WTC11 (cell line): ENCODE measurements at regions of chr15 and their contacts with region 1.

Region 1: DNA sequence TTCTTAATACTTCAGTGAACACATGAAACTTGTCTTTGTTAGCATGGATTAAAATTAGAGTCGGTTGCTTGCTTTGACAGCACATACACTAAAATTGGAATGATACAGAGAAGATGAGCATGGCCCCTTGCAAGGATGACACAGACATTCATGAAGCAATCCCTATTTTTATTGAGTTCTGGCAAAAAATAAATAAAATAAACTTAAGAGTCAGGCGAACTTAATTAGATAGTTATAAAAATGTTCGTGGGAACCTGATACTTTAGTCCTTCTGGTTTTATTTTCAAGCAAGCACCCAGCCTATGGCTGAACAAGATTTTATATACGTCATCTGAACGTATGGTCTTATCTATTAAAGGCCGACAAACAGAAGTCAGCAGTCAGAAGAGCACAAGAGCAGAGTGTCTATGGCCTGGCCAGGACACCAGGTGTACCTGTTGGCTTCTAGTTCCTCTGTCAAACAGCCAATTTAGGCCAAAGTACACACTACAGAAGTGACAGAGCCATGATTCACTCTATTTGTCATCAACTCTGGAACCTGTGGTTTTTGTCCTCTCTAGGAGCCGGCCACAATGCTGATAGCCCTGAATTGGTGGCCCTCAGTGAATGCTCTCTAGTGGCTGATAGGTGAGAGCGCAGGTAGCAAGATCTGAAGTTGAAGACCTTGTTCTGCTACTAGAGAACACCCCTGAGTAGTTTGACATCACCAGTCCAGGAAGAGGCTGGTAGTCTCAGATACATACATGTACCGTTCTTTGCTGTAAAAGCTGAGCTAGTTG is 64.3 kb downstream of the LEO1 start:
- DNase-seq: no peak
- ATAC-seq: peak; percentile 82
- H3K4me3 Mint-ChIP-seq: no peak overlapping the region
- H3K27ac Mint-ChIP-seq: peak overlapping the region; percentile 45; the same call in 1 of the 2 replicates
- H3K4me1 Mint-ChIP-seq: peaks cover 6% of the 10 kb centered on the region; the same call in 1 of the 2 replicates
- H3K27me3 Mint-ChIP-seq: no peaks in the 10 kb centered on the region
- CTCF ChIP-seq: no peak

Region 2: GRCh38 chr15:51737280-51738017 is 169.9 kb before region 1 on chr15 and contains the start of gene LYSMD2:
- CTCF ChIA-PET with region 1: no interaction called
- POLR2A ChIA-PET with region 1: no interaction called
- DNase-seq: peak; percentile 52
- ATAC-seq: peak; percentile 63
- H3K4me3 Mint-ChIP-seq: peak within 1 kb of the TSS; percentile 71
- H3K27ac Mint-ChIP-seq: no peak within 1 kb of the TSS
- H3K4me1 Mint-ChIP-seq: peaks cover 13% of the 10 kb centered on the region
- H3K27me3 Mint-ChIP-seq: peaks cover 44% of the 10 kb centered on the region
- CTCF ChIP-seq: no peak
- total RNA-seq, gene LYSMD2: 2.2 to 2.7 TPM (median 2.6 TPM) in 3 replicates

Region 3: GRCh38 chr15:51801391-51801835 is 105.9 kb before region 1 on chr15:
- CTCF ChIA-PET with region 1: interaction called, 11 read pairs
- POLR2A ChIA-PET with region 1: interaction called, 4 read pairs
- DNase-seq: peak; percentile 63
- ATAC-seq: peak; percentile 91
- H3K4me3 Mint-ChIP-seq: no peak overlapping the region
- H3K27ac Mint-ChIP-seq: no peak overlapping the region
- H3K4me1 Mint-ChIP-seq: no peaks in the 10 kb centered on the region
- H3K27me3 Mint-ChIP-seq: no peaks in the 10 kb centered on the region
- CTCF ChIP-seq: peak; percentile 39; the same call in 1 of the 2 replicates

Region 4: GRCh38 chr15:51853998-51854397 is 53.3 kb before region 1 on chr15:
- CTCF ChIA-PET with region 1: interaction called, 11 read pairs
- POLR2A ChIA-PET with region 1: interaction called, 3 read pairs
- DNase-seq: no peak
- ATAC-seq: no peak
- H3K4me3 Mint-ChIP-seq: no peak overlapping the region
- H3K27ac Mint-ChIP-seq: no peak overlapping the region
- H3K4me1 Mint-ChIP-seq: peaks cover 38% of the 10 kb centered on the region
- H3K27me3 Mint-ChIP-seq: no peaks in the 10 kb centered on the region
- CTCF ChIP-seq: no peak

Region 5: DNA sequence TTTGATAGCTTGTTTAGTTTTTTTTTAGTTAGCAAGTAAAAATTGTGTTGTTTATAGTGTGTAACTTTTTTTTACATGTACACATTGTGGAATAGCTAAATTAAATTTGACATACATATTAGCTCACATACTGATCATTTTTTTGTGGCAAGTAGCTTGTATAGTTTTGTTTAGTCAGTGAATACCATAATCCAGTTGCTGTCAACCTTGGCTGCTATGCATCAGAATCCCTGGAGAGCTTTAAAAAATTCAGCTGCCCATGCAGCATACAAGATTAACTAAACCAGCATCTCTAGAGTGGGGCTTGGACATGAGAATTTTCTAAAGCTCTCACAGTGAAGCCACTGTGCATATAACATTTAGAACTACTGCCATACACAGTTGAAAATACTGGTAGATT is 23.9 kb before region 1 on chr15:
- CTCF ChIA-PET with region 1: interaction called, 15 read pairs
- POLR2A ChIA-PET with region 1: no interaction called
- DNase-seq: no peak
- ATAC-seq: no peak
- H3K4me3 Mint-ChIP-seq: no peak overlapping the region
- H3K27ac Mint-ChIP-seq: no peak overlapping the region
- H3K4me1 Mint-ChIP-seq: no peaks in the 10 kb centered on the region
- H3K27me3 Mint-ChIP-seq: no peaks in the 10 kb centered on the region
- CTCF ChIP-seq: no peak

Region 6: DNA sequence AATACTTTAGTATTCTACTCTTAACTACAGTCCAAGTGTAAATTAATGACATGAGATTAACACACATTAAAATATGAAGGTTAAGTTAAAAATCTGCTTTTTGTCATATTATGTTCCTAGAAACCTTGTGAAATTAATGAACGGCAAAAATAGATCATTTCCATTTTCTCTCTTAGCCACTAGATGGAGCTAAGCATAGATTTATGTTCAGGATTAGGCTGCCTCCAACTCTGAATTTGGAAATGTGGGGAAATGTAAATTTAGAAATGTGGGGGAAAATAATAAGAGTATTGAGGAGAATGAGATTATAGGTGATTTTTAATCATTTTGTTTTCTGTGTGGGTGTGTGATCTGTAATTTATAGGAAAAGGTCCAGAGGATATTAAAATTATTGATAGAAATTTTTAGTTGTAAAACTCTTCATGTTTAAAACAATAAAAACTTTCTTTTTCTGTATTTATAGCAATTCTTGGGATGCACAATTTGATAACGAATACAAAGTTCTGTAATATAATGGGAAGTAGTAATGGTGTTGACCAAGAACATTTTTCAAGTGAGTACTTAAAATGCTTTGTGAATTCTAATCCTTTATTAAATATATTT is 18.6 kb before region 1 on chr15:
- CTCF ChIA-PET with region 1: interaction called, 15 read pairs
- POLR2A ChIA-PET with region 1: no interaction called
- DNase-seq: no peak
- ATAC-seq: no peak
- H3K4me3 Mint-ChIP-seq: no peak overlapping the region
- H3K27ac Mint-ChIP-seq: no peak overlapping the region
- H3K4me1 Mint-ChIP-seq: no peaks in the 10 kb centered on the region
- H3K27me3 Mint-ChIP-seq: no peaks in the 10 kb centered on the region
- CTCF ChIP-seq: no peak

Region 7: GRCh38 chr15:51917493-51917892 is 10.2 kb after region 1 on chr15:
- CTCF ChIA-PET with region 1: interaction called, 20 read pairs
- POLR2A ChIA-PET with region 1: no interaction called
- DNase-seq: peak; percentile 66
- ATAC-seq: peak; percentile 100
- H3K4me3 Mint-ChIP-seq: no peak overlapping the region
- H3K27ac Mint-ChIP-seq: peak overlapping the region; percentile 65; the same call in 1 of the 2 replicates
- H3K4me1 Mint-ChIP-seq: no peaks in the 10 kb centered on the region
- H3K27me3 Mint-ChIP-seq: no peaks in the 10 kb centered on the region
- CTCF ChIP-seq: no peak; the same call in 1 of the 2 replicates

Region 8: GRCh38 chr15:51947124-51947523 is 39.8 kb after region 1 on chr15:
- CTCF ChIA-PET with region 1: no interaction called
- POLR2A ChIA-PET with region 1: no interaction called
- DNase-seq: no peak
- ATAC-seq: no peak
- H3K4me3 Mint-ChIP-seq: no peak overlapping the region
- H3K27ac Mint-ChIP-seq: no peak overlapping the region
- H3K4me1 Mint-ChIP-seq: no peaks in the 10 kb centered on the region
- H3K27me3 Mint-ChIP-seq: no peaks in the 10 kb centered on the region
- CTCF ChIP-seq: no peak

Region 9: DNA sequence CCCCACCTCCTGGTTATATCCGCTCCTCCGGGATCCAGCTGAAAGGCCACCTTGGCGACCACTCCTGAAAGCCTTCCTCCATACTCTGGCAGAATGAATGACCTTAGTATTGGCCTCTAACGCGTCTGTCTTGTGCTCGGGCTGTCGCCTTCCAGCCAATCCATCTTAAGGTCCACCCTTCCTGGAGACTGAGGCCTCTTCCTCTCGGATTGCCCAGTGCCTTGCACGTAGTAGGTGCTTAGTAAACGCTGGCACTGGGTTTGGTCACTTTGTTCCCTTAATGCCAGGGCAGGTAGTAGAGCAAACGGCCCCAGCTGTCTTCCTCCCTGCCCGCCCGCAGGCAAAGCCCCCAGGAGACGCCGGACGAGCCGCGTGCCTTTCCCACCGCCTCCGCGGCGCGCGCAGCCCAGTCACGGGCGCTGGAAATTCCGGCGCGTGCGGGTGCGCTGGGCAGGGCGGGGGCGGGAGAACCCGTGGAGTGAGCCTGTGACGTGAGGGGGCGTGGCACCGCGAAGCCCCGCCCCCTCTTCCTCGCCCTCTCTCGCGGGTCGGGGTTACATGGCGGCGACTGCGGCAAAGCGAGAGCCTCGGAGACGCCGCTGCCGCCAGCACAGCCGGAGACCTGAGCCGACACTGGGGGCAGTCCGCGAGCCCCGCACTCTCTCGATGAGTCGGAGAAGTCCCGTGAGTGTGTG is 111.5 kb after region 1 on chr15 and contains the start of gene MAPK6:
- CTCF ChIA-PET with region 1: no interaction called
- POLR2A ChIA-PET with region 1: no interaction called
- DNase-seq: peak; percentile 89
- ATAC-seq: peak; percentile 83
- H3K4me3 Mint-ChIP-seq: peak within 1 kb of the TSS; percentile 87
- H3K27ac Mint-ChIP-seq: peak within 1 kb of the TSS; percentile 95
- H3K4me1 Mint-ChIP-seq: peaks cover 48% of the 10 kb centered on the region
- H3K27me3 Mint-ChIP-seq: peaks cover 9% of the 10 kb centered on the region
- CTCF ChIP-seq: no peak
- total RNA-seq, gene MAPK6: 82.2 to 95.1 TPM (median 83.2 TPM) in 3 replicates